Gastrocnemius medialis (tissue), 4 donors: ENCODE measurements at regions of chr1 and their contacts with region 1.

Region 1: GRCh38 chr1:204989266-204990058 is 53.5 kb upstream of the CNTN2 start:
- DNase-seq: peak; percentile 41 to 61
- ATAC-seq: peak; percentile 62 to 89
- H3K4me3 ChIP-seq: no peak overlapping the region
- H3K27ac ChIP-seq: no peak overlapping the region
- H3K4me1 ChIP-seq: no peaks in the 10 kb centered on the region
- H3K27me3 ChIP-seq: peaks cover 0 to 2% (median 0%) of the 10 kb centered on the region in 3 donors
- CTCF ChIP-seq: peak; percentile 75 to 91 (median 86)
- POLR2A ChIP-seq: no peak

Region 2: GRCh38 chr1:204959374-204959773 is 30.1 kb before region 1 on chr1:
- in situ Hi-C with region 1: no loop called
- intact Hi-C with region 1: no loop called
- DNase-seq: no peak
- ATAC-seq: peak in 1 of 2 donors; percentile 30
- H3K4me3 ChIP-seq: no peak overlapping the region
- H3K27ac ChIP-seq: no peak overlapping the region
- H3K4me1 ChIP-seq: peaks cover 6 to 11% of the 10 kb centered on the region in 2 donors
- H3K27me3 ChIP-seq: no peaks in the 10 kb centered on the region
- CTCF ChIP-seq: no peak
- POLR2A ChIP-seq: no peak

Region 3: DNA sequence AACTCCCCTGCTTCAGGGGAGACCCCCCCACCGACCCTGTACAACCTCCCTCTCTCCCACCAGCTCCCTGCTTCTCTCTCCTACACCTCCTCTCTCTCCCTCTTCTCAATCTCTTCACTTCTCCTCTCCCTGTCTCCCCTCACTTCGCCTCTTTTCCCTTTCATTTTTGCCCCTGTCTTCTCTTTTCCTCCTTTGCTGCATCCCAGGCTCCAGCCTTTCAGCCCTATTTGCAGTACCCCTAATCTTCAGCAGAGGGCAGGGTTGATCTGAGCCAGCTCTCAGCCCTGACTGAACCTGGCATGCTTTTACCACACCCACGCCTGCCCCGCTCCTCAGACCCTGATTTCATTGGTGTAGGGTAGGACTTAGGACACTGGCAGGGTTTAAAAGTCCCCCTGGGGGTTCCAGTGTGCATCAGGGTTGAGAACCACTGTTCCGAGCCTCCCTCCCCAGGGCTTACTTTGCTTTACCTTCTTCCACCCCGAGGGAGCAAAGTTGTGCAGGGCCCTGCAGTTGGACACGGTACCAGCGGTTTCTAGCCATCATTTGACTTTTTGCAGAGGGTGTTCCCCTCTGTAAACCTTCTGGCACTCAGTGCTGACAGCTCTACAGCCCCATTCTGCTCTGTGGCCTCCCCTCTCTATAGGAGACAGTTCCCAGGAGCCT is 13.8 kb before region 1 on chr1:
- in situ Hi-C with region 1: no loop called
- intact Hi-C with region 1: no loop called
- DNase-seq: no peak
- ATAC-seq: peak; percentile 69 to 86
- H3K4me3 ChIP-seq: no peak overlapping the region
- H3K27ac ChIP-seq: no peak overlapping the region
- H3K4me1 ChIP-seq: no peaks in the 10 kb centered on the region
- H3K27me3 ChIP-seq: no peaks in the 10 kb centered on the region
- CTCF ChIP-seq: peak; percentile 60 to 84 (median 72)
- POLR2A ChIP-seq: no peak

Region 4: DNA sequence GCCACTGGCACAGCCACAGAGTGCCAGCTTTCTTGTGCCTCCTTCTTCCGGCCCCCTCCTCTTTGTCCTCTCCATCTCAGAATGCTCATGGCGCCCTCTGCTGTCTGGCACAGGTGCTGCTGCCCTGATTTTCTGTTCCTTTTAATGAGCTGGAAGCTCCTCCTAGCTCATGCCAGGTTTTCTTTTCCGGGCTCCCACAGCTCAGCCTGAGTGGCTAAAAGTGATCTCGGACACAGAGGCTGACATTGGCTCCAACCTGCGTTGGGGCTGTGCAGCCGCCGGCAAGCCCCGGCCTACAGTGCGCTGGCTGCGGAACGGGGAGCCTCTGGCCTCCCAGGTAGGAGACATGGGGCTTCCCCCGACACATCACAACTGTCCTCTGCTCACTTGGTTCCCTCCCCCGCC is 72.2 kb after region 1 on chr1:
- in situ Hi-C with region 1: loop called in 1 of 4 experiments (anchors 5 kb)
- intact Hi-C with region 1: loop called (anchors 5 kb)
- DNase-seq: peak; percentile 13 to 55
- ATAC-seq: peak; percentile 17 to 68
- H3K4me3 ChIP-seq: no peak overlapping the region
- H3K27ac ChIP-seq: no peak overlapping the region
- H3K4me1 ChIP-seq: no peaks in the 10 kb centered on the region
- H3K27me3 ChIP-seq: no peaks in the 10 kb centered on the region
- CTCF ChIP-seq: peak; percentile 53 to 79 (median 74)
- POLR2A ChIP-seq: no peak

Region 5: GRCh38 chr1:205141236-205142101 is 152.0 kb after region 1 on chr1:
- in situ Hi-C with region 1: loop called in 2 of 4 experiments (anchors 5 to 10 kb)
- intact Hi-C with region 1: loop called (anchors 1 kb)
- DNase-seq: peak; percentile 26 to 62
- ATAC-seq: peak; percentile 81 to 93
- H3K4me3 ChIP-seq: peak overlapping the region in 2 of 4 donors; percentile 31 to 46
- H3K27ac ChIP-seq: peak overlapping the region in 2 of 4 donors; percentile 37 to 48
- H3K4me1 ChIP-seq: peaks cover 7 to 8% of the 10 kb centered on the region in 2 donors
- H3K27me3 ChIP-seq: no peaks in the 10 kb centered on the region
- CTCF ChIP-seq: peak; percentile 71 to 84 (median 78)
- POLR2A ChIP-seq: no peak

Region 6: GRCh38 chr1:205255941-205256780 is 266.7 kb after region 1 on chr1:
- in situ Hi-C with region 1: loop called in 1 of 4 experiments (anchors 25 kb)
- intact Hi-C with region 1: loop called (anchors 5 kb)
- DNase-seq: peak; percentile 84 to 93
- ATAC-seq: peak; percentile 71 to 72
- H3K4me3 ChIP-seq: no peak overlapping the region
- H3K27ac ChIP-seq: peak overlapping the region; percentile 49 to 82 (median 74)
- H3K4me1 ChIP-seq: peaks cover 54 to 67% of the 10 kb centered on the region in 2 donors
- H3K27me3 ChIP-seq: no peaks in the 10 kb centered on the region
- CTCF ChIP-seq: peak; percentile 91 to 99 (median 99)
- POLR2A ChIP-seq: no peak

Region 7: GRCh38 chr1:205273551-205273982 is 284.1 kb after region 1 on chr1:
- in situ Hi-C with region 1: loop called in 1 of 4 experiments (anchors 25 kb)
- intact Hi-C with region 1: no loop called
- DNase-seq: peak; percentile 77 to 79
- ATAC-seq: peak; percentile 62 to 70
- H3K4me3 ChIP-seq: no peak overlapping the region
- H3K27ac ChIP-seq: no peak overlapping the region
- H3K4me1 ChIP-seq: peaks cover 17 to 27% of the 10 kb centered on the region in 2 donors
- H3K27me3 ChIP-seq: no peaks in the 10 kb centered on the region
- CTCF ChIP-seq: peak; percentile 96 to 100 (median 98)
- POLR2A ChIP-seq: no peak